CD4-positive, alpha-beta T cell (primary cell): ENCODE measurements at regions of chr2 and their contacts with region 1.

Region 1: GRCh38 chr2:177164584-177165052 is 48.0 kb upstream of the HNRNPA3 start:
- DNase-seq: peak; percentile 63 to 88 (median 76)
- ATAC-seq: peak; percentile 75
- H3K4me3 ChIP-seq: peak overlapping the region; percentile 33
- H3K4me3 Mint-ChIP-seq: no peak overlapping the region
- H3K27ac ChIP-seq: no peak overlapping the region
- H3K27ac Mint-ChIP-seq: no peak overlapping the region
- H3K4me1 ChIP-seq: peaks cover 14% of the 10 kb centered on the region
- H3K4me1 Mint-ChIP-seq: peaks cover 16% of the 10 kb centered on the region
- H3K27me3 ChIP-seq: no peaks in the 10 kb centered on the region
- H3K27me3 Mint-ChIP-seq: no peaks in the 10 kb centered on the region
- CTCF ChIP-seq: peak; percentile 99

Region 2: DNA sequence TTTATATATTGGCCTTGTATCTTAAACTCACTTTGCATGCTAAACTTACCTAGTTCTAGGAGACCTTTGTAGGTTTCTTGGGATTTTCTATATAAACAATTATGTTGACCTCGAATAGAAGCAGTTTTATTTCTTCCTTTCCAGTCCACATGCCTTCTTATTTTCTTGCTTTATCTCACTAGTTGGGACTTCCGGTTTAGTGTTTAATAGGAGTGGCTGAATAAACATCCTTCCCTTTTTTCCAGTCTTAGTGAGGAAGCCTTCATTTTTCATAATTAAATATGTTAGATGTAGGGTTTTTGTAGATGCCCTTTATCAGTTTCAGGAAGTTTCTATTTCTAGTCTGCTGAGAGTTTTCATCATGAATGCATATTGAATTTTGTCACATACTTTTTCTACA is 299.3 kb before region 1 on chr2:
- CTCF ChIA-PET with region 1: no interaction called
- POLR2A ChIA-PET with region 1: no interaction called
- intact Hi-C with region 1: no loop called
- DNase-seq: no peak
- ATAC-seq: no peak
- H3K4me3 ChIP-seq: no peak overlapping the region
- H3K4me3 Mint-ChIP-seq: no peak overlapping the region
- H3K27ac ChIP-seq: no peak overlapping the region
- H3K27ac Mint-ChIP-seq: no peak overlapping the region
- H3K4me1 ChIP-seq: no peaks in the 10 kb centered on the region
- H3K4me1 Mint-ChIP-seq: no peaks in the 10 kb centered on the region
- H3K27me3 ChIP-seq: no peaks in the 10 kb centered on the region
- H3K27me3 Mint-ChIP-seq: no peaks in the 10 kb centered on the region
- CTCF ChIP-seq: no peak

Region 3: GRCh38 chr2:177148477-177149154 is 16.0 kb before region 1 on chr2:
- CTCF ChIA-PET with region 1: interaction called, 55 read pairs
- POLR2A ChIA-PET with region 1: interaction called, 7 read pairs
- intact Hi-C with region 1: no loop called
- DNase-seq: peak; percentile 50 to 84 (median 62)
- ATAC-seq: peak; percentile 89
- H3K4me3 ChIP-seq: peak overlapping the region; percentile 56
- H3K4me3 Mint-ChIP-seq: peak overlapping the region; percentile 83
- H3K27ac ChIP-seq: no peak overlapping the region
- H3K27ac Mint-ChIP-seq: peak overlapping the region; percentile 8
- H3K4me1 ChIP-seq: peaks cover 8% of the 10 kb centered on the region
- H3K4me1 Mint-ChIP-seq: peaks cover 13% of the 10 kb centered on the region
- H3K27me3 ChIP-seq: peaks cover 4 to 25% of the 10 kb centered on the region in 2 experiments
- H3K27me3 Mint-ChIP-seq: peaks cover 49% of the 10 kb centered on the region
- CTCF ChIP-seq: peak; percentile 99

Region 4: DNA sequence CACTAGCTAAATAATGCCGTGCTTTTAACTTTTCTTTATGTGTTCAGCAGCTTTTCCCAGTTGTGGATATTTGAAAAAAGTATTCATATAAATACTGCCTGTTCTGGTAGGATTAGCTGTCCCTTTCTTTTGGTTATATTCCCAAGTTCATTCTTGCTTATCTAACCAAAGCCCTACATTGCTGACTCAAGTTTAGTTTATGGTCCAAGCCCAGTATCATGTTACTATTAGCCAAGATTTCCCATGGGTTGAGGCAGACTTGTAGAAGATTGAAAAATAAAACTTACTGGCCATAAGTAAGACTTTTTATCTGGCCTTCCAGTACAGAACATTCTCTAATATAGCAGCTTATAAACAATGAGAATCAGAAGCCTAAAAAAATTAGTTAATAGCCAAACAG is 149.6 kb after region 1 on chr2:
- CTCF ChIA-PET with region 1: interaction called, 14 read pairs
- POLR2A ChIA-PET with region 1: interaction called, 19 read pairs
- intact Hi-C with region 1: no loop called
- DNase-seq: no peak
- ATAC-seq: no peak
- H3K4me3 ChIP-seq: no peak overlapping the region
- H3K4me3 Mint-ChIP-seq: no peak overlapping the region
- H3K27ac ChIP-seq: no peak overlapping the region
- H3K27ac Mint-ChIP-seq: peak overlapping the region; percentile 90
- H3K4me1 ChIP-seq: peaks cover 19% of the 10 kb centered on the region
- H3K4me1 Mint-ChIP-seq: peaks cover 38% of the 10 kb centered on the region
- H3K27me3 ChIP-seq: no peaks in the 10 kb centered on the region
- H3K27me3 Mint-ChIP-seq: no peaks in the 10 kb centered on the region
- CTCF ChIP-seq: no peak

Region 5: DNA sequence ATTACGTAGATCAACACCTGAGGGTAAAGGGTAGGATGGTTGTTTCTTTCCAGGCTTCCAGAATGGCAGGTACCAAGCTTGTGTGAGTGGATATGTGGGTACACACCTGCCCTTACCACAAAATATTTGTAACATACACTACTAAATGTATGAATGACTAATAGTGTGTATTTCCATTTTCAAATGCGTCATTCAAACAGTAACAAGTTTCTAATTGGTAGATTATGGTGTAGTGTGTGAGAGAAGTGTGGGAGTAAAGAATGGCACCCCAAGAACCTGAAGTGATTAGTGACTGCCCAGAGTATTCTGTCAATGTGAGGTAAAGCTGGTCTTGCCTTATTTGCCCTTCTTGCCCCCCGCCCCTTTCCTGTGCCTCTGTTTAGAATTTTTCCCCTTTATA is 249.1 kb after region 1 on chr2:
- CTCF ChIA-PET with region 1: interaction called, 46 read pairs
- POLR2A ChIA-PET with region 1: interaction called, 7 read pairs
- intact Hi-C with region 1: loop called (anchors 1 kb)
- DNase-seq: no peak
- ATAC-seq: no peak
- H3K4me3 ChIP-seq: no peak overlapping the region
- H3K4me3 Mint-ChIP-seq: no peak overlapping the region
- H3K27ac ChIP-seq: no peak overlapping the region
- H3K27ac Mint-ChIP-seq: peak overlapping the region; percentile 11
- H3K4me1 ChIP-seq: no peaks in the 10 kb centered on the region
- H3K4me1 Mint-ChIP-seq: peaks cover 47% of the 10 kb centered on the region
- H3K27me3 ChIP-seq: no peaks in the 10 kb centered on the region
- H3K27me3 Mint-ChIP-seq: no peaks in the 10 kb centered on the region
- CTCF ChIP-seq: no peak

Region 6: GRCh38 chr2:177604271-177605065 is 439.9 kb after region 1 on chr2:
- CTCF ChIA-PET with region 1: interaction called, 4 read pairs
- POLR2A ChIA-PET with region 1: no interaction called
- intact Hi-C with region 1: loop called in 1 of 2 experiments (anchors 5 kb)
- DNase-seq: peak in 3 of 14 experiments; percentile 5 to 40 (median 38)
- ATAC-seq: no peak
- H3K4me3 ChIP-seq: no peak overlapping the region
- H3K4me3 Mint-ChIP-seq: no peak overlapping the region
- H3K27ac ChIP-seq: no peak overlapping the region
- H3K27ac Mint-ChIP-seq: no peak overlapping the region
- H3K4me1 ChIP-seq: no peaks in the 10 kb centered on the region
- H3K4me1 Mint-ChIP-seq: no peaks in the 10 kb centered on the region
- H3K27me3 ChIP-seq: peaks cover 0 to 2% of the 10 kb centered on the region in 2 experiments
- H3K27me3 Mint-ChIP-seq: peaks cover 17% of the 10 kb centered on the region
- CTCF ChIP-seq: peak; percentile 44

Region 7: GRCh38 chr2:177675350-177675821 is 510.8 kb after region 1 on chr2:
- CTCF ChIA-PET with region 1: no interaction called
- POLR2A ChIA-PET with region 1: no interaction called
- intact Hi-C with region 1: no loop called
- DNase-seq: no peak
- ATAC-seq: no peak
- H3K4me3 ChIP-seq: no peak overlapping the region
- H3K4me3 Mint-ChIP-seq: no peak overlapping the region
- H3K27ac ChIP-seq: no peak overlapping the region
- H3K27ac Mint-ChIP-seq: no peak overlapping the region
- H3K4me1 ChIP-seq: no peaks in the 10 kb centered on the region
- H3K4me1 Mint-ChIP-seq: no peaks in the 10 kb centered on the region
- H3K27me3 ChIP-seq: peaks cover 0 to 7% of the 10 kb centered on the region in 2 experiments
- H3K27me3 Mint-ChIP-seq: peaks cover 25% of the 10 kb centered on the region
- CTCF ChIP-seq: no peak

Region 8: GRCh38 chr2:177763532-177764265 is 599.1 kb after region 1 on chr2:
- CTCF ChIA-PET with region 1: interaction called, 5 read pairs
- POLR2A ChIA-PET with region 1: no interaction called
- intact Hi-C with region 1: loop called (anchors 2 kb)
- DNase-seq: peak; percentile 59 to 85 (median 70)
- ATAC-seq: peak; percentile 98
- H3K4me3 ChIP-seq: no peak overlapping the region
- H3K4me3 Mint-ChIP-seq: no peak overlapping the region
- H3K27ac ChIP-seq: no peak overlapping the region
- H3K27ac Mint-ChIP-seq: no peak overlapping the region
- H3K4me1 ChIP-seq: peaks cover 6% of the 10 kb centered on the region
- H3K4me1 Mint-ChIP-seq: peaks cover 3% of the 10 kb centered on the region
- H3K27me3 ChIP-seq: no peaks in the 10 kb centered on the region
- H3K27me3 Mint-ChIP-seq: peaks cover 32% of the 10 kb centered on the region
- CTCF ChIP-seq: peak; percentile 87